Caco-2 (cell line): ENCODE measurements at regions of chr2 and their contacts with region 1.

Region 1: GRCh38 chr2:74162951-74163350 is 15.2 kb upstream of the BOLA3 start:
- DNase-seq: no peak
- H3K4me3 ChIP-seq: no peak overlapping the region
- H3K4me3 Mint-ChIP-seq: no peak overlapping the region
- H3K27ac Mint-ChIP-seq: no peak overlapping the region
- H3K4me1 ChIP-seq: no peaks in the 10 kb centered on the region
- H3K4me1 Mint-ChIP-seq: no peaks in the 10 kb centered on the region
- H3K27me3 ChIP-seq: no peaks in the 10 kb centered on the region
- H3K27me3 Mint-ChIP-seq: no peaks in the 10 kb centered on the region
- CTCF ChIP-seq: no peak

Region 2: DNA sequence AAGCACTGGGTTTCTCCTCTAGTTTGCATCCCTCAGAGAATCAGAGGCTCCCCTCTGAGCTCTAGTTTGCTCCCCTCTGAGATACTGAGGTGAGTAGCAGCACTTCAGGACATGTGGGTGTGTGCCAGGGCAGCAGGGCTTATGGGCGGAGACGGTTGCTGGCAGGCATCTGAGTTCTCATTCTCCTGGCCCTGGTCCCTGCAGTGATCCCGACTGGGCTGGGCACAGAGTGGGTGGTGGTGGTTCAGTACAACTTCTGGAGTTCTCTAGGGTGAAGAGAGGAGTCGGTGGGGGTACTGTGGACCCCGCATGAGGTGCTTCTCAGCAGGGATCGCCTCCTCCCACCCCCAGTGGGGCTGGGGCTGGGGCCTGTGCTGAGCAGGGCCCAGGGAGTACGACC is 63.1 kb before region 1 on chr2:
- CTCF ChIA-PET with region 1: no interaction called
- POLR2A ChIA-PET with region 1: no interaction called
- intact Hi-C with region 1: no loop called
- DNase-seq: no peak
- H3K4me3 ChIP-seq: no peak overlapping the region
- H3K4me3 Mint-ChIP-seq: no peak overlapping the region
- H3K27ac Mint-ChIP-seq: no peak overlapping the region
- H3K4me1 ChIP-seq: no peaks in the 10 kb centered on the region
- H3K4me1 Mint-ChIP-seq: no peaks in the 10 kb centered on the region
- H3K27me3 ChIP-seq: no peaks in the 10 kb centered on the region
- H3K27me3 Mint-ChIP-seq: no peaks in the 10 kb centered on the region
- CTCF ChIP-seq: no peak

Region 3: DNA sequence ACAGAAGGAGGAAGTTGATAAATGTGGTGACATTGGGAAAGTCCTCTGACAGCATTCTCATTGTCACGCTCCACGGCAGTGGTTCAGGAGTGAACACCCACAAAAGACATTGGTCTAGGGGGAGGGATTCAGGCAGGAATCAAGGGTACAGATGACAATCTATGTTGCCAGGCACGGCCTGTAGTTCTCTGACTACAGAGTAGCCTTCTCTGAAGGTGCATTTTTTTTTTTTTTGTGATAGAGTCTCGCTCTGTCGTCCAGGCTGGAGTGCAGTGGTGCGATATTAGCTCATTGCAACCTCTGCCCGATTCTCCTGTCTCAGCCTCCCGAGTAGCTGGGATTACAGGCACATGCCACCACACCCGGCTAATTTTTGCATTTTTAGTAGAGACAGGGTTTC is 23.1 kb after region 1 on chr2:
- CTCF ChIA-PET with region 1: no interaction called
- POLR2A ChIA-PET with region 1: no interaction called
- intact Hi-C with region 1: no loop called
- DNase-seq: peak in 1 of 2 experiments; percentile 9
- H3K4me3 ChIP-seq: no peak overlapping the region
- H3K4me3 Mint-ChIP-seq: no peak overlapping the region
- H3K27ac Mint-ChIP-seq: no peak overlapping the region
- H3K4me1 ChIP-seq: 0 out of 2 replicates have a peak, but pooled peaks cover 4% of the 10 kb centered on the region
- H3K4me1 Mint-ChIP-seq: peaks cover 9% of the 10 kb centered on the region
- H3K27me3 ChIP-seq: no peaks in the 10 kb centered on the region
- H3K27me3 Mint-ChIP-seq: peaks cover 3% of the 10 kb centered on the region
- CTCF ChIP-seq: no peak

Region 4: GRCh38 chr2:74198461-74199274 is 35.7 kb after region 1 on chr2 and contains the start of gene MTHFD2:
- CTCF ChIA-PET with region 1: no interaction called
- POLR2A ChIA-PET with region 1: no interaction called
- intact Hi-C with region 1: loop called (anchors 1 kb)
- DNase-seq: peak; percentile 98
- H3K4me3 ChIP-seq: peak within 1 kb of the TSS; percentile 80
- H3K4me3 Mint-ChIP-seq: peak within 1 kb of the TSS; percentile 91
- H3K27ac Mint-ChIP-seq: peak within 1 kb of the TSS; percentile 100
- H3K4me1 ChIP-seq: peaks cover 12% of the 10 kb centered on the region
- H3K4me1 Mint-ChIP-seq: peaks cover 26% of the 10 kb centered on the region
- H3K27me3 ChIP-seq: no peaks in the 10 kb centered on the region
- H3K27me3 Mint-ChIP-seq: no peaks in the 10 kb centered on the region
- CTCF ChIP-seq: peak; percentile 90
- total RNA-seq, gene MTHFD2: 416 and 470 TPM in 2 replicates